Adrenal gland (tissue), 19 donors: ENCODE measurements at regions of chr11 and their contacts with region 1.

Region 1: GRCh38 chr11:43282607-43283440 is 29.0 kb upstream of the API5 start:
- DNase-seq: peak; percentile 28 to 75 (median 40)
- H3K4me3 ChIP-seq: no peak overlapping the region
- H3K27ac ChIP-seq: no peak overlapping the region
- H3K4me1 ChIP-seq: no peaks in the 10 kb centered on the region
- H3K27me3 ChIP-seq: no peaks in the 10 kb centered on the region
- CTCF ChIP-seq: peak; percentile 64 to 93 (median 77)
- POLR2A ChIP-seq: no peak

Region 2: GRCh38 chr11:42762348-42762747 is 520.5 kb before region 1 on chr11:
- intact Hi-C with region 1: loop called in 1 of 2 experiments (anchors 10 kb)
- DNase-seq: no peak
- H3K4me3 ChIP-seq: no peak overlapping the region
- H3K27ac ChIP-seq: no peak overlapping the region
- H3K4me1 ChIP-seq: no peaks in the 10 kb centered on the region
- H3K27me3 ChIP-seq: no peaks in the 10 kb centered on the region
- CTCF ChIP-seq: no peak
- POLR2A ChIP-seq: no peak